ENCODE measurements at regions of chr18 and their contacts with region 1.

Region 1: GRCh38 chr18:63320046-63320689 is 599 bp upstream of the BCL2 start:
- DNase-seq: peak; percentile 60 to 88 (median 82)
- H3K4me3 ChIP-seq: peak overlapping the region in 57 of 59 donors; percentile 7 to 93 (median 81)
- H3K27ac ChIP-seq: peak overlapping the region in 52 of 59 donors; percentile 26 to 93 (median 81)
- H3K27me3 ChIP-seq: no peaks in the 10 kb centered on the region
- CTCF ChIP-seq: peak in 4 of 56 donors; percentile 5 to 8 (median 7)

Region 2: GRCh38 chr18:63016270-63016669 is 303.9 kb before region 1 on chr18:
- intact Hi-C with region 1: loop called (anchors 2 kb)
- DNase-seq: peak in 5 of 10 donors; percentile 42 to 63 (median 49)
- H3K4me3 ChIP-seq: no peak overlapping the region
- H3K27ac ChIP-seq: no peak overlapping the region
- H3K27me3 ChIP-seq: peaks cover 0 to 3% (median 0%) of the 10 kb centered on the region in 45 donors
- CTCF ChIP-seq: peak; percentile 73 to 94 (median 85)

Region 3: DNA sequence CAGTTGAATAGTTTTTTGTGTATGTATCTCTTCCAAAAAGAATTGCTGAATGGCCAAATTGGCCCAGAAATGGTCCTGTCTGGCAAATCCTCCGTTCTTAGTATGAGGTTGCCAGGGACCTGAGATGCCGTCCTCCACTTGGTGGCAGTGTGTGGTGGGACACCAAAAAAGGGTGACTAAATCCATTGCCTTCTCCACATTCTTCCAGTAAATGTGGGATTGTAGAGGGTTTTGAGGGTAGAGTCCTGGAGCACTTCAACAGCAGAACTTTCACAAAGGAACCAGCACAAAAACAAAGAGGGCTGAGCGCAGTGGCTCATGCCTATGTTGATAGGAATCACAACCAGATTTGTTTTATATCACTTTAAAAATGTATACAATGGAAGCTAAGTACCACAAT is 200.5 kb before region 1 on chr18:
- intact Hi-C with region 1: loop called in 1 of 2 experiments (anchors 5 kb)
- DNase-seq: peak in 8 of 10 donors; percentile 24 to 75 (median 64)
- H3K4me3 ChIP-seq: no peak overlapping the region
- H3K27ac ChIP-seq: no peak overlapping the region
- H3K27me3 ChIP-seq: peaks cover 0 to 5% (median 0%) of the 10 kb centered on the region in 45 donors
- CTCF ChIP-seq: peak; percentile 18 to 81 (median 64)

Region 4: GRCh38 chr18:63237881-63238667 is 82.1 kb before region 1 on chr18:
- intact Hi-C with region 1: loop called in 1 of 2 experiments (anchors 5 kb)
- DNase-seq: no peak
- H3K4me3 ChIP-seq: peak overlapping the region in 40 of 59 donors; percentile 2 to 48 (median 21)
- H3K27ac ChIP-seq: peak overlapping the region; percentile 20 to 89 (median 79)
- H3K27me3 ChIP-seq: no peaks in the 10 kb centered on the region
- CTCF ChIP-seq: peak in 2 of 56 donors; percentile 14 to 28

Region 5: DNA sequence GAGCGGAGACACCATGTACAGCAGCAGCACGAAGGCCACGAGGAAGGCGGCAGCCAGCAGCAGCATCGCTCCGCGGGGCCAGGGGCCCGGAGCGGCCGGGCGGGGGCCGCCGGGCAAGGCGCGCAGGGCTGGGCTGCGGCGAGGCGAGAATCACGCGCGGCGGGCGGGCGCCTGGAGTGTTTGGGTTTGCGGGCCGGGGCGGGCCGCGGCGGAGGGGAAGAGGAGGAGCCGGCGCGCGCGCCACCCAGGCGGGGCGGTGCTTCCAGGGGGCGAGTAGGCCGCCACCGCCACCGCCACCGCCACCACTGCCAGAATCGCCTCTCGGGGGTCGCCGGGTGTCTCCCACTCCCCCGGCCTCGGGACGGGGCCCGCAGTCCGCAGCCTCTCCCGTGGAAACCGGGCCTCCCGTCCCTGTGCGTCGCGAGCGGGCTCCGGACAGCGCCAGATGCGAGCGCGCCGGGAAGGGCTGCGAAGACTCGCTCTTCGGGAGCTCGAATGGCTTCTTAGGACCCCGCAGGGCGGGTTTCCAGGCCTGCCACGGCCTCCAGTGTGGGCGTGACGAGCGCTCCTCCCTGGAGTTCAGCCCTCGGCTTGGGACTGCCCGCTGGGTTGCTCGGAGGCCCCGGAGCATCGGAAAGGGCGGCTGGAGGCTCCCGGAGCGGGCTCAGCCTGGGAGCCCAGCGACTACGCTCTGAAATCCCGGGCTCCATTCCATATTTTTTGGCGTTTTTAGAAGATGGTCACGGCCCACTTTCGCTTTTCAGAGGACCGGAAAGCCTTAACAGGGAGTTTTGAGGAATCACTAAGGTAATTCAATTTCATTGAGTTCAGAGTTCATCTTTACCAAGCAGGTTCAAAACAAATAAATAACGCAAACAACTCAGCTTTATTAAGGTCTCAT is 47.1 kb after region 1 on chr18 and contains the start of gene KDSR:
- intact Hi-C with region 1: loop called in 1 of 2 experiments (anchors 2 kb)
- DNase-seq: peak; percentile 75 to 95 (median 92)
- H3K4me3 ChIP-seq: peak within 1 kb of the TSS; percentile 77 to 97 (median 89)
- H3K27ac ChIP-seq: peak within 1 kb of the TSS; percentile 75 to 99 (median 96)
- H3K27me3 ChIP-seq: no peaks in the 10 kb centered on the region
- CTCF ChIP-seq: peak in 19 of 56 donors; percentile 2 to 54 (median 24)
- total RNA-seq, gene KDSR: 43.2 to 111 (median 58.5) TPM

Measured in dorsolateral prefrontal cortex (tissue), 120 donors.